Right lobe of liver (tissue), 6 donors: ENCODE measurements at regions of chr1 and their contacts with region 1.

Region 1: DNA sequence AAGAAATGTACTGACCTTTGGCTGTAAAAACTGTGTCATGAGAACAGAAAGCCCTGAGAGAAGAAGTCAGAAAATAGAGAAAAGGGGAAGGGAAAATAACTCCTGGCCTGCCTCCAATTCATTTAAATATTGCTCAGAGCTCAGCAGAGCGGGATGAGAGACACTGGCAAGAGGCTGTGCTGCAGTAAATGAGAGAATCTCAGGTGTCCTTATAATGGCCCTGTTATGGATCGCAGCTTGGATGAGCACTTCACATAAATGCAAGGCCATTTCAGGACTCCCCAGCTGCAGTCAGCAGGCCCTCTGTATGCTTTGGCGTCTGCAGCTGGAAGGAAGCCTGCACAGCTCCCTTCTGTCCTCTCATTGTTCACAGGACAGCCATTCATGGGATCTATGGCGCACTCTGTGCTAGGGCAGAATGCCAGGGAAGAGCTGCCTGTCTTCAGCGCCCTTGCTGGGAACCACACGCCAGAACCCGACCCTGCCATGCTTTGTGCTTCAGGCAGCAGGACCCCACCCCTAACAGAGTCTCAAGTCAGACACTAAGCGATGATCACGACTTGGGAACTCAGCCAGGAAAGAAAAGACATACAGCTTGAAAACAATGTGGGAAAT is 20.7 kb upstream of the ABCB10 start:
- DNase-seq: peak in 2 of 3 donors; percentile 40 to 54
- ATAC-seq: peak; percentile 72 to 83 (median 82)
- H3K4me3 ChIP-seq: no peak overlapping the region
- H3K27ac ChIP-seq: peak overlapping the region in 1 of 3 donors; percentile 8
- H3K4me1 ChIP-seq: no peaks in the 10 kb centered on the region
- H3K27me3 ChIP-seq: no peaks in the 10 kb centered on the region
- CTCF ChIP-seq: no peak
- POLR2A ChIP-seq: no peak

Region 2: GRCh38 chr1:229625915-229626831 is 47.0 kb after region 1 on chr1 and contains the starts of genes TAF5L and URB2:
- intact Hi-C with region 1: loop called in 1 of 2 experiments (anchors 10 kb)
- DNase-seq: peak; percentile 91 to 93 (median 92)
- ATAC-seq: peak; percentile 95 to 98 (median 96)
- H3K4me3 ChIP-seq: peak within 1 kb of the TSS; percentile 96 to 99 (median 97)
- H3K27ac ChIP-seq: peak within 1 kb of the TSS; percentile 60 to 84 (median 65)
- H3K4me1 ChIP-seq: peaks cover 0 to 26% (median 13%) of the 10 kb centered on the region in 4 donors
- H3K27me3 ChIP-seq: no peaks in the 10 kb centered on the region
- CTCF ChIP-seq: no peak
- POLR2A ChIP-seq: peak; percentile 72
- total RNA-seq, gene TAF5L: 7.6 to 14.0 (median 9.9) TPM
- total RNA-seq, gene URB2: 3.7 to 7.6 (median 3.9) TPM

Region 3: DNA sequence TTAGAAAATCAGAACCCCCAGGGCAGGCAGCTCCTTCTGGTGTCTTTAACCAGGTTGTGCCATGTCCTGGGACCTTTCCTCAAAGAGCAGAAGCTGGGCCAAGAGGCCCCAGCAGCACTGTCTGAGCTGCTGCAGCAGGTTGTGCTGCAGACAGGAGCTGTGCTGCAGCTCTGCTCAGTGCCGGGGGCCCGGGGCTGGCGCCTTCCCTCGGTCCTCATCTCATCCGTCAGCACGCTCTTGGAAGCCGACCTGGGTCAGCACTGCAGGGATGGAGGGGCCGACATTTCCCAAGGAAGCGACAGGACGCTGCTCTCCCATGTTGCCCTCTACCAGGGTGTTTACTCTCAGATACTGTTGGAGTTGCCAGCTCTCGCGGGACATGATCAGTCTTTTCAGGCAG is 58.6 kb after region 1 on chr1:
- intact Hi-C with region 1: no loop called
- DNase-seq: no peak
- ATAC-seq: peak in 1 of 4 donors; percentile 22
- H3K4me3 ChIP-seq: no peak overlapping the region
- H3K27ac ChIP-seq: no peak overlapping the region
- H3K4me1 ChIP-seq: no peaks in the 10 kb centered on the region
- H3K27me3 ChIP-seq: no peaks in the 10 kb centered on the region
- CTCF ChIP-seq: no peak
- POLR2A ChIP-seq: no peak